Endothelial cell of umbilical vein (primary cell): ENCODE measurements at regions of chr6 and their contacts with region 1.

Region 1: GRCh38 chr6:111642463-111643158 is 36.9 kb upstream of the TRAF3IP2 start:
- DNase-seq: peak; percentile 79
- H3K4me3 ChIP-seq: no peak overlapping the region
- H3K27ac ChIP-seq: no peak overlapping the region
- H3K4me1 ChIP-seq: no peaks in the 10 kb centered on the region
- H3K27me3 ChIP-seq: no peaks in the 10 kb centered on the region
- CTCF ChIP-seq: peak; percentile 63 to 67
- POLR2A ChIP-seq: no peak

Region 2: DNA sequence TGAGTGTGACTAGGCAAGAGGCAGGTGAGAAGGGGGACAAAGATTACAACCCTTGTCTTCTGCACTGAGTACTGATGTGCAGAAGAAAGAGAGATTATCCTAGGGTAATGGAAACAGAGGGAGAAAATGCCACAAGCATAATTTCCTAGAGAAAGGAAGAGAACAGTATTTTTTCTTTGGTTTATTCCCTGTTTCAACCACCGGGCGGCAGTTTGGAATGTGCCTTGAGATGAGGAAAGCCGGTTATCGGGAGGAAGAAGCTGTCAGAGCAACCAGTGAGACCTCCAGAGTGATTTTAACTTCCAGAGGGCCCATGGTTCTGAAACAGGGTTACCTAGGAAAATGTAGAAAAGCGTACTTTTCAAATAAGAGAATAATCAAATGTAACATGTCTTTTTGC is 281.0 kb before region 1 on chr6:
- CTCF ChIA-PET with region 1: interaction called, 16 read pairs
- POLR2A ChIA-PET with region 1: no interaction called
- dilution Hi-C with region 1: no loop called
- intact Hi-C with region 1: loop called (anchors 1 kb)
- DNase-seq: peak; percentile 46
- H3K4me3 ChIP-seq: no peak overlapping the region
- H3K27ac ChIP-seq: no peak overlapping the region
- H3K4me1 ChIP-seq: no peaks in the 10 kb centered on the region
- H3K27me3 ChIP-seq: no peaks in the 10 kb centered on the region
- CTCF ChIP-seq: peak; percentile 22 to 48
- POLR2A ChIP-seq: no peak

Region 3: GRCh38 chr6:111430605-111431378 is 211.8 kb before region 1 on chr6:
- CTCF ChIA-PET with region 1: no interaction called
- POLR2A ChIA-PET with region 1: no interaction called
- dilution Hi-C with region 1: no loop called
- intact Hi-C with region 1: no loop called
- DNase-seq: no peak
- H3K4me3 ChIP-seq: no peak overlapping the region
- H3K27ac ChIP-seq: no peak overlapping the region
- H3K4me1 ChIP-seq: peaks cover 28% of the 10 kb centered on the region
- H3K27me3 ChIP-seq: no peaks in the 10 kb centered on the region
- CTCF ChIP-seq: no peak
- POLR2A ChIP-seq: no peak

Region 4: GRCh38 chr6:111721753-111722154 is 79.1 kb after region 1 on chr6:
- CTCF ChIA-PET with region 1: no interaction called
- POLR2A ChIA-PET with region 1: no interaction called
- dilution Hi-C with region 1: no loop called
- intact Hi-C with region 1: no loop called
- DNase-seq: peak; percentile 29
- H3K4me3 ChIP-seq: no peak overlapping the region
- H3K27ac ChIP-seq: no peak overlapping the region
- H3K4me1 ChIP-seq: no peaks in the 10 kb centered on the region
- H3K27me3 ChIP-seq: no peaks in the 10 kb centered on the region
- CTCF ChIP-seq: peak; percentile 57 to 58
- POLR2A ChIP-seq: no peak